ENCODE measurements at regions of chr20 and their contacts with region 1.

Region 1: DNA sequence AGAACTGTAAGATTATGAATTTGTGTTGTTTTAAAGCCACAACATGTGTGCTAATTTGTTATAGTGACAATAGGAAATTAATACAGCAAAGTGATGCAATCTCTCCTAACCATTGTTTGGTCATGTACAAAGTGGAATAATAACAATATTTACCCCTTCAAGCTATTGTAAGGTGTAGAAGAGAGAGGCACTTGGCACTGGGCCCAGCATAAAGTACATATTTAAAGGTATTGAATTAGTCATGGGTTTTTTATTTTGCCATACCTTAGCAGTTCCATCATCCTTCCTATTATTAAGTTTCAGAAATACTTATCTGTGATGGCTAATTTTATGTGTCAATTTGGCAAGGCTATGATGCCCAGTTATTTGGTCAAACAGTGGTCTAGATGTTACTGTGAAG is 322.4 kb upstream of the TSHZ2 start:
- DNase-seq: no peak
- H3K4me3 ChIP-seq: no peak overlapping the region
- H3K27ac ChIP-seq: no peak overlapping the region
- H3K4me1 ChIP-seq: no peaks in the 10 kb centered on the region
- H3K27me3 ChIP-seq: no peaks in the 10 kb centered on the region
- CTCF ChIP-seq: no peak
- EP300 ChIP-seq: no peak
- POLR2A ChIP-seq: no peak

Region 2: DNA sequence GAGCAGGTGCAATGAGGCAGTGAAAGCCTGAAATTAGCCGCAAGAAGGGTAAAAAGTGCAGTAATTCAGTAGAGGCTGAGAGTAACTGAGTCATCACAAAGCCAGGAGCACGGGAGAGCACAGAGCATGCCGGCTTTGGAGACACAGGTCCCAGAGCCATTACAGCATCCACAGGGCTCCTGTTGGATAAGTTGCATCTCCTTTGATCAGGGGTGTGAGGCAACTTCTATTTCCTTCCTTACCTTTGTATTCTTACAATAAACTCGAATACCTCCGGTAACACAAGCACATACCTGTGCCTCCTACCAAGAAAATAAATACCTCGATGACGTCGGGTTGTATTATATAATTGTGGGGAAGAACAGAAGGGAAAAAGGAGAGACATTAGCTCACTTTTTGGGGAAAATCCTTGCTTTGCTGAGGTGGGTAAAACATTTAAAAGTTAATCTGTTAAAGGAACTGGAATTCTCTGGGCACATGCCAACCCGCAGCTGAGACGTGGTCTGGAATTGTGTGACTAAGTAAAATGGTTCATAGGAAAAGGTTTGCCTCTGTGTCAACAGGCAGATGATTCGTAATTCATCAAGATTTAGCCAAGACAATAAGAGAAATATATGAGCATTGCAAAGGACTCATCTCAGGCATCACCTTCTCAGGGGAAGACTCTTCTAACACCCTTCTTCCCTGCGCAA is 97.4 kb before region 1 on chr20:
- in situ Hi-C with region 1: loop called in 1 of 4 experiments (anchors 25 kb)
- intact Hi-C with region 1: no loop called
- DNase-seq: no peak
- H3K4me3 ChIP-seq: no peak overlapping the region
- H3K27ac ChIP-seq: no peak overlapping the region
- H3K4me1 ChIP-seq: no peaks in the 10 kb centered on the region
- H3K27me3 ChIP-seq: no peaks in the 10 kb centered on the region
- CTCF ChIP-seq: no peak
- EP300 ChIP-seq: no peak
- POLR2A ChIP-seq: no peak

Region 3: GRCh38 chr20:52747845-52748284 is 98.1 kb after region 1 on chr20:
- in situ Hi-C with region 1: loop called in 1 of 4 experiments (anchors 25 kb)
- intact Hi-C with region 1: no loop called
- DNase-seq: no peak
- H3K4me3 ChIP-seq: no peak overlapping the region
- H3K27ac ChIP-seq: peak overlapping the region in 1 of 4 donors; percentile 47
- H3K4me1 ChIP-seq: no peaks in the 10 kb centered on the region
- H3K27me3 ChIP-seq: no peaks in the 10 kb centered on the region
- CTCF ChIP-seq: no peak
- EP300 ChIP-seq: no peak
- POLR2A ChIP-seq: no peak

Region 4: DNA sequence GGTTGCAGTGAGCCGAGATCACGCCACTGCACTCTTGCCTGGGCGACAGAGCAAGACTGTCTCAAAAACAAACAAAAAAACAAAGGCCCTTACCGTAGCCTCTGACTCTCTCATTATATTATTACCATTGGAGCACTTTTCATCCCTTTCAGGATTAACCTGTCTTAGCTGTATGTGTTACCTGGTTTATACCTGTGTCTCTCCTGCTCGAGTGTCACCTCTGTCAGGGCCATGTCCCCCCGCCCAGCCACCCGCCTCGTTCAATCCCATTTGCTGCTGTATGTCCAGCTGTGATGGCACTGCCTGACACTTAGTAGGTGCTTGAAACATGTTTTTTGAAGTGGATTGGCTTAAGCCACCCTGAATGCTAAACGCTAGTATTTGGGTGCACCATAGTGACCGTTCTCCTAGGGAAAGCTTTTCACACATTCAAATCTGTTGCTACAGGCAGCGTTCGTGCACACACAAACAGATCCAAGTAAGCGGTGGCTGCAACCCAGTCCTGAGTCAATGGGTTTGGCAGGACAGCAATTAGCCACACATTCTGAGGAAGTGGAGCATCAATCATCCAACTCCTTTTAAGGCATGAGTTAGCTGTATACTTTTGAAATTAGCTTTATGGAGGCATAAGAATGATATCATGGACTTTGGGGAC is 1042.8 kb after region 1 on chr20:
- in situ Hi-C with region 1: no loop called
- intact Hi-C with region 1: no loop called
- DNase-seq: peak; percentile 26
- H3K4me3 ChIP-seq: no peak overlapping the region
- H3K27ac ChIP-seq: no peak overlapping the region
- H3K4me1 ChIP-seq: peaks cover 0 to 7% (median 0%) of the 10 kb centered on the region in 4 donors
- H3K27me3 ChIP-seq: no peaks in the 10 kb centered on the region
- CTCF ChIP-seq: no peak
- EP300 ChIP-seq: no peak
- POLR2A ChIP-seq: no peak

Measured in transverse colon (tissue), 4 donors.